ENCODE measurements at regions of chr5 and their contacts with region 1.

Region 1: DNA sequence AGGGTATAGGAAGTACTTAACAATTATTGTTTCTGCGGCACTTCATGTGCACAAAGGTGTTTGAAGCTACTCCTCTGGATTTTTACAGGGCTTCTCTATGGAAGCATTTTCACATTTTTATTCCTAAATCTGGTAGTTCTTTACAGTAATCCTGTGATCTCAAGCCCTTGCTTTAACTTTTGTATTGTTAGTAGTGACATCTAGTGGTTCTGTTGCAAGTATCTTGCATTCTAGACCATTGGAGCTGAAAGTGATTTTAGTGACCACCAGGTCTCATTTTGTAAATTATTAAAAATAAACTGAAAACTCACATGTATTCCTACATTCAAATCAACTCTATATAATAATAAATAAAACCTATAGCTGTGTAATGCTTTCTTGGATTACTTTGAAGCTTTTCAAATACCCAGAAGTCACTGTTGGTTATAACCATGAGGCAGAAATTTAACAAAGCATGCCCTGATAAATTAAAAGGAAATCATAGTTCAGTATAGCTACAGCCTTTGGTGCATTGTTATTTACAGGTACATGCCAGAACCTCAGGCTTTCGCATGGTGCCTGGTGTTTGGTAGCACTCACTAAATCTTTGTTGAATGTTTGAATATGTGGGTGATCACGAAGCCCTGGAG is 18.9 kb downstream of the RPS23 start:
- DNase-seq: no peak
- ATAC-seq: peak; percentile 83
- H3K4me3 ChIP-seq: no peak overlapping the region
- H3K27ac ChIP-seq: no peak overlapping the region
- H3K4me1 ChIP-seq: no peaks in the 10 kb centered on the region
- H3K27me3 ChIP-seq: no peaks in the 10 kb centered on the region
- CTCF ChIP-seq: peak; percentile 40 to 45 (median 40); a peak in 4 of 6 replicates
- EP300 ChIP-seq: no peak
- POLR2A ChIP-seq: no peak
- RAD21 ChIP-seq: peak; percentile 46

Region 2: GRCh38 chr5:81425569-81425968 is 833.7 kb before region 1 on chr5:
- CTCF ChIA-PET with region 1: interaction called, 17 read pairs
- POLR2A ChIA-PET with region 1: no interaction called
- RAD21 ChIA-PET with region 1: no interaction called
- SMC1A ChIA-PET with region 1: no interaction called
- in situ Hi-C with region 1: no loop called
- intact Hi-C with region 1: no loop called
- DNase-seq: no peak
- ATAC-seq: peak; percentile 84
- H3K4me3 ChIP-seq: no peak overlapping the region
- H3K27ac ChIP-seq: no peak overlapping the region
- H3K4me1 ChIP-seq: no peaks in the 10 kb centered on the region
- H3K27me3 ChIP-seq: no peaks in the 10 kb centered on the region
- CTCF ChIP-seq: peak; percentile 36 to 55 (median 48); a peak in 4 of 6 replicates
- EP300 ChIP-seq: no peak
- POLR2A ChIP-seq: no peak
- RAD21 ChIP-seq: peak; percentile 60

Region 3: DNA sequence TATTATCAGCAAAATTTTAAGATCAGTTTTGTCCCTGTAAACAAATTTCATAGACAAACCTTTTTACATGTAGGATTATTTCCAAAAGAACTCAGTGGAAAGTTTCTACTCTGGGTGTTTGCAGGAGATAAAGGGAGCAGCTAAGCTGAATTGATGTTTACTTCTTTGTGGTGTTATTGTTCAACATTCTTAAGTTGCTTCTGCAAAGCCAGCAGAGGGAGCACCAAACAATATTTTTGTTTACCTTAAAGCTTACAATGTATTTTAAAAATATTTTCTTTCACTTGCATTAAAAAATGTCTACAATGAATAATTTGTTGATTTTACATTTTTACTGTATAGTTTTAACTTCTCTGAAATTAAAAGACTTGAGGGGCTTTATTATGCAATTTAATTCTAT is 152.0 kb before region 1 on chr5:
- CTCF ChIA-PET with region 1: interaction called, 12 read pairs
- POLR2A ChIA-PET with region 1: no interaction called
- RAD21 ChIA-PET with region 1: interaction called, 4 read pairs
- SMC1A ChIA-PET with region 1: interaction called, 3 read pairs
- in situ Hi-C with region 1: no loop called
- intact Hi-C with region 1: no loop called
- DNase-seq: no peak
- ATAC-seq: peak; percentile 51
- H3K4me3 ChIP-seq: no peak overlapping the region
- H3K27ac ChIP-seq: no peak overlapping the region
- H3K4me1 ChIP-seq: no peaks in the 10 kb centered on the region
- H3K27me3 ChIP-seq: no peaks in the 10 kb centered on the region
- CTCF ChIP-seq: peak; percentile 29 to 50 (median 49); a peak in 5 of 6 replicates
- EP300 ChIP-seq: no peak
- POLR2A ChIP-seq: no peak
- RAD21 ChIP-seq: peak; percentile 57

Region 4: GRCh38 chr5:82174128-82174918 is 85.0 kb before region 1 on chr5:
- CTCF ChIA-PET with region 1: interaction called, 7 read pairs
- POLR2A ChIA-PET with region 1: no interaction called
- RAD21 ChIA-PET with region 1: interaction called, 3 read pairs
- SMC1A ChIA-PET with region 1: interaction called, 12 read pairs
- in situ Hi-C with region 1: no loop called
- intact Hi-C with region 1: no loop called
- DNase-seq: peak; percentile 83
- ATAC-seq: peak; percentile 94
- H3K4me3 ChIP-seq: peak overlapping the region; percentile 0; the same call in 1 of the 2 replicates
- H3K27ac ChIP-seq: peak overlapping the region; percentile 69
- H3K4me1 ChIP-seq: peaks cover 25% of the 10 kb centered on the region
- H3K27me3 ChIP-seq: no peaks in the 10 kb centered on the region
- CTCF ChIP-seq: peak; percentile 64 to 78 (median 76)
- EP300 ChIP-seq: peak; percentile 99 to 100
- POLR2A ChIP-seq: no peak
- RAD21 ChIP-seq: peak; percentile 65

Region 5: GRCh38 chr5:82234883-82235282 is 24.4 kb before region 1 on chr5:
- CTCF ChIA-PET with region 1: interaction called, 13 read pairs
- POLR2A ChIA-PET with region 1: no interaction called
- RAD21 ChIA-PET with region 1: interaction called, 3 read pairs
- SMC1A ChIA-PET with region 1: interaction called, 8 read pairs
- in situ Hi-C with region 1: no loop called
- intact Hi-C with region 1: no loop called
- DNase-seq: no peak
- ATAC-seq: no peak
- H3K4me3 ChIP-seq: no peak overlapping the region
- H3K27ac ChIP-seq: no peak overlapping the region
- H3K4me1 ChIP-seq: no peaks in the 10 kb centered on the region
- H3K27me3 ChIP-seq: no peaks in the 10 kb centered on the region
- CTCF ChIP-seq: no peak
- EP300 ChIP-seq: no peak
- POLR2A ChIP-seq: no peak
- RAD21 ChIP-seq: no peak

Region 6: GRCh38 chr5:82244854-82245635 is 14.2 kb before region 1 on chr5:
- CTCF ChIA-PET with region 1: interaction called, 21 read pairs
- POLR2A ChIA-PET with region 1: no interaction called
- RAD21 ChIA-PET with region 1: no interaction called
- SMC1A ChIA-PET with region 1: interaction called, 10 read pairs
- in situ Hi-C with region 1: no loop called
- intact Hi-C with region 1: no loop called
- DNase-seq: no peak
- ATAC-seq: no peak
- H3K4me3 ChIP-seq: no peak overlapping the region
- H3K27ac ChIP-seq: no peak overlapping the region
- H3K4me1 ChIP-seq: no peaks in the 10 kb centered on the region
- H3K27me3 ChIP-seq: no peaks in the 10 kb centered on the region
- CTCF ChIP-seq: no peak
- EP300 ChIP-seq: no peak
- POLR2A ChIP-seq: no peak
- RAD21 ChIP-seq: no peak

Measured in GM12878 (cell line).